ENCODE measurements at regions of chr21 and their contacts with region 1.

Region 1: GRCh38 chr21:27225151-27225550 is 258.3 kb upstream of the ADAMTS5 start:
- DNase-seq: peak; percentile 57
- ATAC-seq: peak; percentile 80
- H3K4me3 ChIP-seq: no peak overlapping the region
- H3K27ac ChIP-seq: peak overlapping the region; percentile 47; the same call in 1 of the 2 replicates
- H3K4me1 ChIP-seq: peaks cover 6% of the 10 kb centered on the region
- H3K27me3 ChIP-seq: no peaks in the 10 kb centered on the region
- CTCF ChIP-seq: no peak
- POLR2A ChIP-seq: no peak
- RAD21 ChIP-seq: no peak

Region 2: DNA sequence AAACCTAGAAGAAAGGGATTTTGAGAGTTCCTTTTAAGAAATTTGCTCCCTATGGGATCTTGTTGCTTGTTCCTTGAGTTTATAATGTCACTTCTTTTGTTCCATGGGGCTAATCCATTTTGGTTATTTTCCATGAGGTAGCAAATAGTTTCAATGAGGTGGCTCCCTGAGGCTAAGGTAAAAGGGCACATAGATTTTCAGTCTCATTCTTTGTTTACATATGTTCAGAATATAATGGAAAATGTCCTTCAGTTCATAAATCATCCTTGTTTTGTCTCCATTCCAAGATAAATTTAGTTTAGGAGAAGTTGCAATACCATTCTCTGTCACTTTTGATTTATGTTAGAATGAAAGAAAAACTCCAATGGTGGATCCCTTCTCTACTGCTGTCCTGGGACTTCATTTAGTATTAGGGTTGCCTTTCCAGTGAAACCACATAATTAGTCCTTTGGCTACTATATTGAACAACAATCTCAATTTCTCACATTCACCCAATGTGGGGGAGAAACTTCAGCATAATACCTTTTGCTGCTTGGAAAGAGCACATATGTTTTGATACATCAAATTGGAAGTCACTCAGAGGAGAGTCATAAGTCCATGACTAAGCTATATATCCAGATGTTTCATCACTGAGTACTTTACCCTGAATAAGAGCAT is 177.4 kb before region 1 on chr21:
- CTCF ChIA-PET with region 1: no interaction called
- POLR2A ChIA-PET with region 1: no interaction called
- dilution Hi-C with region 1: no loop called
- in situ Hi-C with region 1: no loop called
- intact Hi-C with region 1: no loop called
- DNase-seq: peak; percentile 79
- ATAC-seq: peak; percentile 67
- H3K4me3 ChIP-seq: no peak overlapping the region
- H3K27ac ChIP-seq: no peak overlapping the region
- H3K4me1 ChIP-seq: peaks cover 7% of the 10 kb centered on the region; the same call in 1 of the 2 replicates
- H3K27me3 ChIP-seq: no peaks in the 10 kb centered on the region
- CTCF ChIP-seq: no peak
- POLR2A ChIP-seq: no peak
- RAD21 ChIP-seq: no peak

Region 3: DNA sequence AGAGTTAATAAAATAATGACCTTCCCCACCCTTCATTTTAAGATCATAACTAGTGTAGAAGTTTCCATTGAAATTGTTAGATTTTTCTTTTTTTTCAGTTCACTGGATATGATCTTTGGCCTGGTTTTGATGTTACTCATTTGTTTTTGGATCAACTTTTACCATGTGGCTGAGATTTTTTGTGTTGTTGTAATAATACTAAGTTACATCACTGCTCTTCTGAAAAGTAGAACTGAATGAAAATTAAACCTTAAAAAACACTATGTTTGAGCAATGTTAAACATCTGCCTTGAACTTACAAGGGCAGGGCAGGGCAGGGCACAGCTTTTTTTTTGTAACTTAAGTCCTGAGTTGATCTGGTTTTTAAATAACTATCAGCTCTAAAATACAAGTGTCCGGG is 53.4 kb before region 1 on chr21:
- CTCF ChIA-PET with region 1: no interaction called
- POLR2A ChIA-PET with region 1: no interaction called
- dilution Hi-C with region 1: no loop called
- in situ Hi-C with region 1: no loop called
- intact Hi-C with region 1: loop called (anchors 10 kb)
- DNase-seq: peak; percentile 43
- ATAC-seq: peak; percentile 63; the same call in 1 of the 2 replicates
- H3K4me3 ChIP-seq: no peak overlapping the region
- H3K27ac ChIP-seq: no peak overlapping the region
- H3K4me1 ChIP-seq: no peaks in the 10 kb centered on the region
- H3K27me3 ChIP-seq: no peaks in the 10 kb centered on the region
- CTCF ChIP-seq: no peak
- POLR2A ChIP-seq: no peak
- RAD21 ChIP-seq: no peak

Measured in IMR-90 (cell line).